ENCODE measurements at regions of chr11 and their contacts with region 1.

Region 1: GRCh38 chr11:5004424-5005274 is 10.0 kb downstream of the OR51L1 start:
- DNase-seq: peak; percentile 75
- H3K4me3 ChIP-seq: no peak overlapping the region
- H3K27ac ChIP-seq: no peak overlapping the region
- H3K4me1 ChIP-seq: no peaks in the 10 kb centered on the region
- H3K27me3 ChIP-seq: peaks cover 6% of the 10 kb centered on the region; the same call in 1 of the 2 replicates

Region 2: DNA sequence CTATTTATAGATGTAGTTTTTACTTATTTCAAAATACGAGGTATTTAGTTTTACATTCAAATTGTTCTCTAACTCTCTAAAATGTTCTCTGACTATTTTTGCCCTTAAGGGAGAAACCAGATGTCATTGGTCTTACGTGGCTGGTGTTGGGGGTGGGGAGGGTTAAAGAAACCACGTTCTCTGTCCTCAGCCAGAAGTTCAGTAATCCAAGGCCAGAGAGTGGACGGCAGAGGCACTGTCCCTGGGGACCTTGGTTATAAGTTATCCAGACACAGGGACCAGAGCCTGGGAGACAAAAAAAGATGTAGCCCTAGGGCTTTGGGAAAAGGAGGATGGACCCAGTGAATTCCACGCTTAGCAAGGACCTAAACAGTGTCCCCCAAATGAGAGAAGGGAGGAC is 361.6 kb before region 1 on chr11:
- in situ Hi-C with region 1: loop called (anchors 10 kb)
- DNase-seq: no peak
- H3K4me3 ChIP-seq: no peak overlapping the region
- H3K27ac ChIP-seq: no peak overlapping the region
- H3K4me1 ChIP-seq: no peaks in the 10 kb centered on the region
- H3K27me3 ChIP-seq: peaks cover 3% of the 10 kb centered on the region; the same call in 1 of the 2 replicates